ENCODE measurements at regions of chr2 and their contacts with region 1.

Region 1: GRCh38 chr2:215828517-215829184 is 184.7 kb downstream of the MREG start:
- DNase-seq: peak; percentile 81
- ATAC-seq: peak; percentile 82
- H3K4me3 ChIP-seq: no peak overlapping the region
- H3K27ac ChIP-seq: peak overlapping the region; percentile 67
- H3K4me1 ChIP-seq: peaks cover 82% of the 10 kb centered on the region
- H3K27me3 ChIP-seq: no peaks in the 10 kb centered on the region
- CTCF ChIP-seq: peak; percentile 76
- EP300 ChIP-seq: peak in 1 of 2 experiments; percentile 62; a peak in 2 of 4 replicates
- POLR2A ChIP-seq: no peak
- RAD21 ChIP-seq: peak; percentile 69

Region 2: GRCh38 chr2:215311625-215312396 is 516.8 kb before region 1 on chr2 and contains the start of gene ATIC:
- CTCF ChIA-PET with region 1: no interaction called
- POLR2A ChIA-PET with region 1: no interaction called
- in situ Hi-C with region 1: no loop called
- intact Hi-C with region 1: loop called (anchors 5 kb)
- DNase-seq: peak; percentile 94
- ATAC-seq: peak; percentile 97
- H3K4me3 ChIP-seq: peak within 1 kb of the TSS; percentile 72 to 86 (median 83)
- H3K27ac ChIP-seq: peak within 1 kb of the TSS; percentile 79
- H3K4me1 ChIP-seq: peaks cover 53% of the 10 kb centered on the region
- H3K27me3 ChIP-seq: no peaks in the 10 kb centered on the region; a peak in 1 of 5 replicates
- CTCF ChIP-seq: 0 out of 2 replicates have a peak, but pooled peaks have one; percentile 16
- EP300 ChIP-seq: no peak; a peak in 1 of 4 replicates
- POLR2A ChIP-seq: peak; percentile 88 to 96
- RAD21 ChIP-seq: peak; percentile 65
- total RNA-seq, gene ATIC: 89.8 and 276 TPM in 2 replicates

Region 3: DNA sequence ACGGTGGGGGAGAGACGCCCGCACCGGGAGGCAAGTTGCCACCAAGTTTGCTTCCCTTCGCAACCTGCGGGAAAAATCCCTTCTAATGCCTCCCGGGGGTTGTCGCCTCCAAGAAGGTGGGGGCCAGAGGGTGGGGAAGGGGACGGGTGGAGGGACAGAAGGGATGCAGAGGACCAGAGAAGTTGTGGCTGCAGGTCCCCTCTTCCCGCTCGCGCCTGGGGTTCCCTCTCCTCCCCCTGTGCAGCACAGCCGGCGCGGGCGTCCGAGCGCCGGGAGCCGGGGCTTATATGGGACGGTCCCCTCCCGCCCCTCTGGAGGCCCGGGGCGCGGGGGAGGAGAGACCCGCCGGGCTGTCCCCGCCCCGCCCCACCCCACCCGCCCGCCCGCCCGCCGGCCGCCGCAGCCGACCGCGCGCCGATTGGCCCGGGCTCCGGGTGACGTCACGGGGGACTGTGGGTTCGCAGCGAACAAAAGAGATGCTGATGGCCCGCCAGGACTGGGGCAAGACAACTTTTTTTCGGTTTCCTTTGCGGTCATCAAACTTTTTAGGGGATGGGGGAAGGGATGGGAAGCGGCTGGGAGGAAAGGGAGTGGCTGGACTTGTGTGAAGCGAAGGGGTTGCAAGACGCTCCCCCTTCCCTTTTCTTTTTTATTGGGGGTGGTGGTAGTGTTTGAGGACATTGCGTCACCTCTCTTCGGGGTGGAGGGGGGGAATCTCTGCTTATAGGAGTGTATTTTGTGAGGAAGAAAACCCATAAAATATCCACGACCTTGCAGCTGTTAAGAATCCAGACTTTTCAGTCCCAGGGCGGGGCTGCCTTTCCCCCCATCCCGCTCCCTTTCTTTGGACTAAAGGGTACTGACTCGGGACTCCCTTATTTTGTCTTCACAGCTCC is 392.6 kb before region 1 on chr2 and contains the start of gene FN1:
- CTCF ChIA-PET with region 1: no interaction called
- POLR2A ChIA-PET with region 1: interaction called, 6 read pairs
- in situ Hi-C with region 1: no loop called
- intact Hi-C with region 1: loop called (anchors 5 kb)
- DNase-seq: peak; percentile 91
- ATAC-seq: peak; percentile 92
- H3K4me3 ChIP-seq: peak within 1 kb of the TSS; percentile 86 to 99 (median 95)
- H3K27ac ChIP-seq: peak within 1 kb of the TSS; percentile 71
- H3K4me1 ChIP-seq: peaks cover 71% of the 10 kb centered on the region
- H3K27me3 ChIP-seq: no peaks in the 10 kb centered on the region; a peak in 1 of 5 replicates
- CTCF ChIP-seq: no peak
- EP300 ChIP-seq: peak in 1 of 2 experiments; percentile 27; a peak in 1 of 4 replicates
- POLR2A ChIP-seq: peak; percentile 97 to 99
- RAD21 ChIP-seq: no peak; the same call in 1 of the 2 replicates
- total RNA-seq, gene FN1: 1,029 and 1,847 TPM in 2 replicates

Region 4: DNA sequence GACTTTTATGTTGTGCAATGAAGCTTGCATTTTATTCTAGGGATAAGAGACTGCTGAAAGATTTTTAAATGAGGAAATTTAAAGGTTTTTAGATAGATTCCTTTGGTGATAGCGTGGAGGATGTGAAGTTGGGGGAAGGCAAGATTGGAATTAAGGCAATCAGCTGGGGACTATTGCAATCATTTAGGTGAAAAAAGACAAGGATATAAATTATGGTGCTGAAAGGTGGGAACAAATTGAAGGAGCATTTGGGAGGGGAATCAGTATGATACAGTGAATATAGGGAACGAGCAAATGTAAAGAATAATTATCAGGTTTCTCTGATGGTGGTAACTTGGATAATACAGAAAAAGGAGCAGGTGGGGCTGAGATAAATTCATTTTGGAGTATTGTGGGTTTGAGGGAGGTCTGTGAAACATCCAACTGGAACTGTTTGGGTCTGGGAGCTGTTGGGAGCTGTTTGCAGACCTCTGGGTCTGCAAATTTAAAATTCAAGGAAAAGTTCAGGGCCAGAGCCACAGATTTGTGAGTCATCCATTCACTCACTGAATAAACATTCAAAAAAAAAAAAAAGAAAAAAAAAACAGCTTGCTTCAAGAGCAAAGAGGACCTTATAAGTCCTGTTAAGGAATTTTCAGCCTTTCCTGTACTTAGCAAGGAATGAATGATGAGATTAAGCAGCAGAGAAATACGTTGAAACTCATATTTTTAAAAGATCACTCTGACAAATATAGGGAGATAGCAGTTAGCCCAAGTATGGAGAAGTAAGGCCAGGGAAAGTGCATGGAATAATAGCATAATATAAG is 135.3 kb before region 1 on chr2:
- CTCF ChIA-PET with region 1: no interaction called
- POLR2A ChIA-PET with region 1: interaction called, 12 read pairs
- in situ Hi-C with region 1: no loop called
- intact Hi-C with region 1: no loop called
- DNase-seq: peak; percentile 93
- ATAC-seq: peak; percentile 92
- H3K4me3 ChIP-seq: peak overlapping the region in 1 of 3 experiments; percentile 13; a peak in 1 of 6 replicates
- H3K27ac ChIP-seq: peak overlapping the region; percentile 80
- H3K4me1 ChIP-seq: peaks cover 47% of the 10 kb centered on the region
- H3K27me3 ChIP-seq: no peaks in the 10 kb centered on the region
- CTCF ChIP-seq: no peak
- EP300 ChIP-seq: peak in 1 of 2 experiments; percentile 96; a peak in 2 of 4 replicates
- POLR2A ChIP-seq: peak in 1 of 2 experiments; percentile 47; a peak in 1 of 4 replicates
- RAD21 ChIP-seq: no peak

Region 5: DNA sequence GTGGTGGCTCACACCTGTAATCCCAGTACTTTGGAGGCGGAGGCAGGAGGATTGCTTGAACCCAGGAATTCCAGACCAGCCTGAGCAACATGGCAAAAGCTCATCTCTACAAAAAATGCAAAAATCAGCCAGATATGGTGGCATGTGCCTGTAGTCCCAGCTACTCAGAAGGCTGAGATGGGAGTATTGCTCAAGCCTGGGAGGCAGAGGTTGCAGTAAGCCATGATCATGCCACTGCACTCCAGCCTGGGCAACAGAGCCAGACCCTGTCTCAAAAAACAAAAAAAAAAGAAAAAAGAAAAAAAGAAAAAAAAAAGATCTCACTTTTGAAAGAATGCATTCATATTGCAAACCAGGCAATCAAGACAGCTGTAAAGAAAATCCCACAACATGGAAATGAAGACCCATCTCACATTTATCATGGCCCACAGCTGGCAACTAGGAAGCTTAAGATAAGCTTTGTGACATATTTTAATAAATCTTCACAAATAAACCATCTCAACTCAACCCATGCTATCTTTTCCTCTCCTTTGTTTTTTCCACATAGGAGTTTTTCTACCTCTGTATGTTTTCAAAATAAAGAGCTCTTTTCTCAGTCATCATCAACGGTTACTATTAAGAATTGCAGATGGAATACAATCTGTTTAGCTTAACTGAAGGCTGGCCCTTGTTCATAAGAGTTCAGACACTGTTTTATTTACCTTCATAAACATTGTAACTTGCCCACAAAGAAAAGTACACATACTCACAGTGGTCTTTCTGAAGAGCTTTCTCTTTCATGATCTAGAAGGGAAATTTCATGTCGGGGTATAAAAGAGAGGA is 47.7 kb after region 1 on chr2:
- CTCF ChIA-PET with region 1: no interaction called
- POLR2A ChIA-PET with region 1: interaction called, 7 read pairs
- in situ Hi-C with region 1: no loop called
- intact Hi-C with region 1: loop called (anchors 2 kb)
- DNase-seq: peak; percentile 90
- ATAC-seq: peak; percentile 93
- H3K4me3 ChIP-seq: no peak overlapping the region
- H3K27ac ChIP-seq: peak overlapping the region; percentile 53
- H3K4me1 ChIP-seq: peaks cover 57% of the 10 kb centered on the region
- H3K27me3 ChIP-seq: no peaks in the 10 kb centered on the region
- CTCF ChIP-seq: no peak
- EP300 ChIP-seq: peak in 1 of 2 experiments; percentile 94; a peak in 2 of 4 replicates
- POLR2A ChIP-seq: no peak
- RAD21 ChIP-seq: no peak